Transverse colon (tissue), 4 donors: ENCODE measurements at regions of chr16 and their contacts with region 1.

Region 1: GRCh38 chr16:59899940-59900339 is 1165.8 kb upstream of the GOT2 start:
- DNase-seq: no peak
- H3K4me3 ChIP-seq: no peak overlapping the region
- H3K27ac ChIP-seq: no peak overlapping the region
- H3K4me1 ChIP-seq: no peaks in the 10 kb centered on the region
- H3K27me3 ChIP-seq: no peaks in the 10 kb centered on the region
- CTCF ChIP-seq: no peak
- EP300 ChIP-seq: no peak
- POLR2A ChIP-seq: no peak

Region 2: DNA sequence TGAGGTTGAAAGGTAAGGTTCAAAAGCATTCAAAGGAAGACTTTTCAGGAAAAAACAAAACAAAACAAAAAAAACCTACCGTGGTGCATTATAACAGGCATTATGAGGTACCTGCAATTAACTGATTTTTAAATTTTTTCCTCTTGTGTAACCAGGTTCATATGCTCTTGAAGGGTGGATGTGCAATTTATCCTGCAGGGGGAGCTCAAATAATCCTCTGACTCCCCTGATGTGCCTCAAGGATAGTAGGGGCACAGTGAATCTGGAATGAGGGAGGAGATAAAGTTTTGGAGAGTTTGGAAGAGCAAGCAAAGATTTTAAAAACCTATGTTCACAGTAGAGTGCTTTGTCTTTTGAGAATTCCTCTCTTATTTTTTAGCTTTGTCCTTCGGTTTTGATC is 786.9 kb after region 1 on chr16:
- in situ Hi-C with region 1: no loop called
- intact Hi-C with region 1: loop called (anchors 5 kb)
- DNase-seq: no peak
- H3K4me3 ChIP-seq: no peak overlapping the region
- H3K27ac ChIP-seq: no peak overlapping the region
- H3K4me1 ChIP-seq: no peaks in the 10 kb centered on the region
- H3K27me3 ChIP-seq: no peaks in the 10 kb centered on the region
- CTCF ChIP-seq: no peak
- EP300 ChIP-seq: no peak
- POLR2A ChIP-seq: no peak